CD4-positive, alpha-beta memory T cell (primary cell): ENCODE measurements at regions of chr9 and their contacts with region 1.

Region 1: GRCh38 chr9:137086531-137087408 is at the start of gene MAN1B1:
- DNase-seq: peak; percentile 98 to 100 (median 100)
- H3K4me3 ChIP-seq: peak within 1 kb of the TSS; percentile 81 to 82
- H3K4me3 Mint-ChIP-seq: peak within 1 kb of the TSS; percentile 88 to 93 (median 90)
- H3K27ac ChIP-seq: peak within 1 kb of the TSS; percentile 92
- H3K27ac Mint-ChIP-seq: peak within 1 kb of the TSS; percentile 90 to 99 (median 96)
- H3K4me1 ChIP-seq: peaks cover 29% of the 10 kb centered on the region
- H3K4me1 Mint-ChIP-seq: peaks cover 17 to 37% (median 28%) of the 10 kb centered on the region in 4 donors
- H3K27me3 ChIP-seq: no peaks in the 10 kb centered on the region
- H3K27me3 Mint-ChIP-seq: no peaks in the 10 kb centered on the region
- total RNA-seq, gene MAN1B1: 63.3 to 71.0 TPM

Region 2: DNA sequence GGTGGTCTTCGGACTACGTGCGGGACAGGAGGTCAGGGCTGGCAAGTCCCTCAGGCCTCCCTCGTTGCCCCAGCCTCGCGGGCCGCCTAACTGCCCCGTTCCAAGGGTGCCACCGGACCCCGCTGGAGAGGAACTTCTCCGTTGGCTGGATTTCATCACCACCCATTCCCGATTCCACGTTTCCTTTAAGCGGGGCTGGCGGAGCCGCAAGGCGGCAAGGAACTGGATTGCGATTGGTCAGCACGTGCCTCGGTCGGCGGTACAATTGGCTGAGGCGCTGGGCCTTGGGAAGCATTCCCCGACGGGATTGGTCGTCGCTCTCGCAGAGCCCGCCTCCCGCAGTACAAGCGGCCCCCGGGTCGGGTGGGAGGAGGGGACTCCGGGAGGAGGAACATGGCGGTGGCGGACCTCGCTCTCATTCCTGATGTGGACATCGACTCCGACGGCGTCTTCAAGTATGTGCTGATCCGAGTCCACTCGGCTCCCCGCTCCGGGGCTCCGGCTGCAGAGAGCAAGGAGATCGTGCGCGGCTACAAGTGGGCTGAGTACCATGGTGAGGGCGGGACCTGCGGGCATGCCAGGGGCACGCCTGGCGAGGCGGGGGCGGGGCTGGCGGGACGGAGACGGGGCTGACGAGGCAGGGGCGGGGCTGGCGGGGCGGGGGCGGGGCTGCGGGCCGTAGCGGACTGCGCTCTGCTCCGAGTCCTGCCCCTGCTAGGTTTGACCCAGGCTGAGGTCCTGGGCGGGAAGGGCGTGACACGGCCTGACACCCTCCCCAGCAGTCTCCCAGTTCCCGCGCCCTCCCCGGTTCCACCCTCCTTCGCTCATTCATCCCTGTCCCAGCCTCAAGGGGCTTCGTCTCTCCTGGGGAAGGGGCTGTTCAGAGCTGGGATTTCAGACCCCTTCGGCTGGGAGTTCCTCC is 237.5 kb before region 1 on chr9 and contains the start of gene PHPT1:
- CTCF ChIA-PET with region 1: no interaction called
- POLR2A ChIA-PET with region 1: no interaction called
- intact Hi-C with region 1: loop called (anchors 5 kb)
- DNase-seq: peak; percentile 96 to 99 (median 97)
- H3K4me3 ChIP-seq: peak within 1 kb of the TSS; percentile 54 to 85
- H3K4me3 Mint-ChIP-seq: peak within 1 kb of the TSS; percentile 89 to 94 (median 92)
- H3K27ac ChIP-seq: peak within 1 kb of the TSS; percentile 47
- H3K27ac Mint-ChIP-seq: peak within 1 kb of the TSS; percentile 77 to 96 (median 93)
- H3K4me1 ChIP-seq: peaks cover 26% of the 10 kb centered on the region
- H3K4me1 Mint-ChIP-seq: peaks cover 7 to 27% (median 12%) of the 10 kb centered on the region in 4 donors
- H3K27me3 ChIP-seq: no peaks in the 10 kb centered on the region
- H3K27me3 Mint-ChIP-seq: peaks cover 3 to 10% of the 10 kb centered on the region in 2 donors
- total RNA-seq, gene PHPT1: 41.3 to 42.6 TPM

Region 3: DNA sequence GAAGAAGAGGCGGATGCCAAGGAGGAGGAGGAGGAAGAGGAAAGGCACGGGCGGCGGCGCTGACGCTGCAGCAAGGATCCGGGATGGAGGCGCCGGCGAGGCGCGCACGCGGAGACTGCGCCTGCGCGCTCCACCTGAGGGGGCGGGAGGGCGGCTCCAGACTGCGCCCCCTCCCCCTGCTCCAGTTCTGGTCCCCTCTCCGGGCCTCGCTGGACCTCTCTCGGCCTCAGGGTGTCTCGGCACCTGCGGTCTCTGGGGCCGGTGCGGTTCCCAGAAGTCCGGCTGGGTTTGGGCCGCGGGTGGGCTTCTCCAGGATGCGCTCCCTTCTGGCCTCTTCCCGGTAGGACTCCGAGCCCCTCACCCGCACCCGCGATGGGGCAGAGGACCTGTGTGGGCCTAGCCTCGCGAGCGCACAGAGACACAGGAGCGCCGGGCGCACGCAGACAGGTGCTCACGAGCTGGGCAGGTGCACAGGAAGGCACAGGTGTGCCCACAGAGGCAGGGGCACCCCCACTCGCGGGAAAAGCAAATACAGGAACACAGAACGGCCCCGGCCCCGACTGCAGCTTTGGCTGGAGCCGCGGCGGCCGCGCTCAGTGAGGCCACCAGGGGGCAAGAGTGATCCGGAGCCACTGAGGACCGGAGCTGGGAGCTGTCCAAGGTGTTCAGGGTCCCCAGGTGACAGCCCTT is 40.5 kb before region 1 on chr9 and contains the start of gene NPDC1:
- CTCF ChIA-PET with region 1: interaction called, 6 read pairs
- POLR2A ChIA-PET with region 1: interaction called, 10 read pairs
- intact Hi-C with region 1: no loop called
- DNase-seq: peak; percentile 72 to 79 (median 77)
- H3K4me3 ChIP-seq: peak within 1 kb of the TSS in 1 of 2 donors; percentile 72
- H3K4me3 Mint-ChIP-seq: peak within 1 kb of the TSS; percentile 72 to 88 (median 82)
- H3K27ac ChIP-seq: no peak within 1 kb of the TSS
- H3K27ac Mint-ChIP-seq: peak within 1 kb of the TSS in 3 of 7 donors; percentile 52 to 84 (median 53)
- H3K4me1 ChIP-seq: peaks cover 37% of the 10 kb centered on the region
- H3K4me1 Mint-ChIP-seq: peaks cover 3 to 22% (median 9%) of the 10 kb centered on the region in 4 donors
- H3K27me3 ChIP-seq: peaks cover 32% of the 10 kb centered on the region
- H3K27me3 Mint-ChIP-seq: peaks cover 15 to 19% of the 10 kb centered on the region in 2 donors
- total RNA-seq, gene NPDC1: 20.7 to 21.4 TPM

Region 4: GRCh38 chr9:137114610-137115391 is 28.0 kb after region 1 on chr9 and contains the start of gene DPP7:
- CTCF ChIA-PET with region 1: interaction called, 4 read pairs
- POLR2A ChIA-PET with region 1: interaction called, 11 read pairs
- intact Hi-C with region 1: no loop called
- DNase-seq: peak; percentile 79 to 83 (median 80)
- H3K4me3 ChIP-seq: peak within 1 kb of the TSS in 1 of 2 donors; percentile 43
- H3K4me3 Mint-ChIP-seq: peak within 1 kb of the TSS; percentile 39 to 78 (median 66)
- H3K27ac ChIP-seq: peak within 1 kb of the TSS; percentile 58
- H3K27ac Mint-ChIP-seq: peak within 1 kb of the TSS in 4 of 7 donors; percentile 30 to 50 (median 42)
- H3K4me1 ChIP-seq: peaks cover 16% of the 10 kb centered on the region
- H3K4me1 Mint-ChIP-seq: peaks cover 0 to 17% (median 2%) of the 10 kb centered on the region in 4 donors
- H3K27me3 ChIP-seq: no peaks in the 10 kb centered on the region
- H3K27me3 Mint-ChIP-seq: no peaks in the 10 kb centered on the region
- total RNA-seq, gene DPP7: 357 to 362 TPM

Region 5: GRCh38 chr9:137200311-137201204 is 113.8 kb after region 1 on chr9 and contains the start of gene TPRN:
- CTCF ChIA-PET with region 1: no interaction called
- POLR2A ChIA-PET with region 1: interaction called, 13 read pairs
- intact Hi-C with region 1: no loop called
- DNase-seq: peak; percentile 97 to 99 (median 98)
- H3K4me3 ChIP-seq: peak within 1 kb of the TSS; percentile 52 to 77
- H3K4me3 Mint-ChIP-seq: peak within 1 kb of the TSS; percentile 81 to 93 (median 82)
- H3K27ac ChIP-seq: peak within 1 kb of the TSS; percentile 72
- H3K27ac Mint-ChIP-seq: peak within 1 kb of the TSS; percentile 62 to 93 (median 83)
- H3K4me1 ChIP-seq: peaks cover 40% of the 10 kb centered on the region
- H3K4me1 Mint-ChIP-seq: peaks cover 9 to 35% (median 25%) of the 10 kb centered on the region in 4 donors
- H3K27me3 ChIP-seq: no peaks in the 10 kb centered on the region
- H3K27me3 Mint-ChIP-seq: no peaks in the 10 kb centered on the region
- total RNA-seq, gene TPRN: 8.5 to 8.6 TPM